ENCODE measurements at regions of chrX and their contacts with region 1.

Region 1: GRCh38 chrX:70087857-70088630 is 25.8 kb downstream of the OTUD6A start:
- DNase-seq: no peak
- ATAC-seq: peak; percentile 47 to 55

Region 2: DNA sequence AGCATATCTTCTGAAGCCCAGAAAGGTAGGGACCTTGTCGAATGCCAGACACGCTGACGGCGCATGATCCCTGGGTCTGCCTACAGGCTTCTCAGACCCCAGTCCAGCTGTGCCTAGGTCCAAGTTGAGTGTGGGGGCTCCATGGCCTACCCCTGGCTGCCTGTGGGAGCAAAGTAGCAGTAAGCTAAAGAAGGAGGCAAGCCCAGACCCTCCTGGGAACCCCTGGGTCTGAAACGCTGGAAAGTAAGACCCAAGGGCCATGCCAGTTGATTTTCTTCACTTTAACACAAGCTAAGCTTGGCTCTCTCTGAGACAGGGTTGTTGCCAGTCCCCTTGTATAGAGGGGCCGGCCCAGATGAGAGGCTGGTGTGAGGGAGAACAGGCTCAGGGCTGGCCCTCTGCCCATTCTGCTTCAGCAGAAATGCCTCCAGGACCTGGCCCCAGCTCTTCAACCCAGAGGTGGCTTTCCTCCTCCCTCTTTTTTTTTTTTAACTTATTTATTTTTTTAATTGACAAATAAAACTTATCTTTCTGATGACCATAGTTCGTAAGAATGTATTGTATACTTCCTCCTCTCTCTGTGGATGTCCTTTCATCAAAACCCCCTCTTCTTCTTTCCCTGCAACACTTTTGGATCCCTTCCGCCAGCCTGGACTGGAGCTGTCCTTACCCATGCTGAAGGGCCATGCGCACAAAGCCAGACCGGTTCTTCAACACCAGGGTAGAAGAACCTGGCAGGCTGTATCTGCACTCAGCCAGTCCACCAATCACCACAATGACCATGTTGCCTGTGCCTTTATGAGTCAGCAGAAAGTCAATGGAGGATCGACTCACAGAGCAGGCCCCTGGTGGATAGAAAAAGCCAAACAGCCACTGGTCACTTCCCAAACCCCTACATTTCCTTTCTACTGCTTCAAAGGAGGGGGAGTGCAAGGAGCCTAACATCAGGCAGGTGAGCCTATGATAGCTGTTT is 45.4 kb before region 1 on chrX:
- intact Hi-C with region 1: loop called in 1 of 2 experiments (anchors 5 kb)
- DNase-seq: no peak
- ATAC-seq: peak in 1 of 2 donors; percentile 41